OCI-LY7 (cell line): ENCODE measurements at regions of chr1 and their contacts with region 1.

Region 1: GRCh38 chr1:153598309-153599172 is 14.4 kb downstream of the S100A16 start:
- DNase-seq: peak; percentile 98
- H3K4me3 ChIP-seq: peak overlapping the region; percentile 56
- H3K27ac ChIP-seq: peak overlapping the region; percentile 92
- H3K4me1 ChIP-seq: peaks cover 29% of the 10 kb centered on the region
- CTCF ChIP-seq: no peak

Region 2: DNA sequence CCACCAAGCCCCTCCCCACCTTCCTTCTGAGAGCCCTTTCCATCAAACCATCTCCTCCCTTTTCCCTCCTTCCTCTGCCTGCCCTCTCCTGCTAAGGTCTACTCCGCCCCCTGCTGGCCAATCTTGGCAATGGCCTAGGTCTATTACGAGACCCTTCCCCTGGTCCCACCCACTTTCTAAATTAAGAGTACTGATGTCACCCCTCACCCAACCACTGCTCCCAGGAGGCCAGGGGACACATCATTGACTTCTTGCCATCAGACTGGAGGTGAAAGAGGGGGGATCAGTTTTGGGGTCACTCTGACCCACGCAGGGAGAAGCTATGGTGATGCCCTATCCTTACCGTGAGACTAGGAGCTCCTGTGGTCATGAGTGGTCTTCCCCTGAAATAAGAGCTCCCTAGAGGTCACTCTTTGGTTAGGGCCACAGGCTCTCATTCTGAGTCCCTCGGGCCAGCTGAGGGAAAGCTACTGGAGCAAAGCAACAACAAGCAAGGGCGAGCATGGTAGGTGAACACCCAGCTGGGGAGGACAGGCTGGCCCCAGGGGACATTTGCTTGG is 103.5 kb before region 1 on chr1:
- CTCF ChIA-PET with region 1: no interaction called
- POLR2A ChIA-PET with region 1: no interaction called
- intact Hi-C with region 1: no loop called
- DNase-seq: peak; percentile 70
- H3K4me3 ChIP-seq: no peak overlapping the region
- H3K27ac ChIP-seq: no peak overlapping the region
- H3K4me1 ChIP-seq: no peaks in the 10 kb centered on the region
- CTCF ChIP-seq: peak; percentile 89

Region 3: GRCh38 chr1:153633716-153634665 is 35.5 kb after region 1 on chr1 and contains the start of gene CHTOP:
- CTCF ChIA-PET with region 1: no interaction called
- POLR2A ChIA-PET with region 1: interaction called, 8 read pairs
- intact Hi-C with region 1: loop called (anchors 2 kb)
- DNase-seq: peak; percentile 99
- H3K4me3 ChIP-seq: peak within 1 kb of the TSS; percentile 83
- H3K27ac ChIP-seq: peak within 1 kb of the TSS; percentile 97
- H3K4me1 ChIP-seq: peaks cover 16% of the 10 kb centered on the region
- CTCF ChIP-seq: no peak
- total RNA-seq, gene CHTOP: 70.9 and 85.3 TPM in 2 replicates

Region 4: GRCh38 chr1:153658400-153659174 is 60.0 kb after region 1 on chr1 and contains the start of gene SNAPIN:
- CTCF ChIA-PET with region 1: interaction called, 3 read pairs
- POLR2A ChIA-PET with region 1: no interaction called
- intact Hi-C with region 1: loop called (anchors 2 kb)
- DNase-seq: peak; percentile 91
- H3K4me3 ChIP-seq: peak within 1 kb of the TSS; percentile 96
- H3K27ac ChIP-seq: peak within 1 kb of the TSS; percentile 68
- H3K4me1 ChIP-seq: peaks cover 18% of the 10 kb centered on the region
- CTCF ChIP-seq: 0 out of 2 replicates have a peak, but pooled peaks have one; percentile 24
- total RNA-seq, gene SNAPIN: 33.2 and 44.5 TPM in 2 replicates